Transverse colon (tissue), 4 donors: ENCODE measurements at regions of chr11 and their contacts with region 1.

Region 1: DNA sequence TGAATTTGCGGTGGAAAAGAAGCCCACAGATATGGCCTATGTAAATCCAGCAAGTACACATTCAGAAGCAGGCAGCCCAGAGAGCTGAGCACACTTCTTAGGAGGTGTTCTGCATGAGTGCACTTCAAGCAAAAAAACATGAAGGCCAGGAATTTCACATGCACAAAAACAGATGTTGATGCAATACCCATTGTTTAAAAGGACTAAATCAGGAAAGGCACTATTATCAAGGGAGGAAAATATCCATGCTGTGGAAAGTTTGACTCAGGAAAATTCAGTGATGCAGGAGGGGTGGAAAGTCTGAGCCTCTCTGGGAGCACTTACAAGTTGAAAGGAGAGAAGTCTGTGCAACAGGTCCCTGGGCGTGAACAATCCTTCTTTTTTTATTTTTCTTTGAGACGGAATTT is 15.8 kb upstream of the CARS1 start:
- DNase-seq: no peak
- H3K4me3 ChIP-seq: no peak overlapping the region
- H3K27ac ChIP-seq: no peak overlapping the region
- H3K4me1 ChIP-seq: no peaks in the 10 kb centered on the region
- H3K27me3 ChIP-seq: no peaks in the 10 kb centered on the region
- CTCF ChIP-seq: no peak
- EP300 ChIP-seq: no peak
- POLR2A ChIP-seq: no peak

Region 2: GRCh38 chr11:3021125-3021524 is 51.9 kb before region 1 on chr11:
- in situ Hi-C with region 1: no loop called
- intact Hi-C with region 1: no loop called
- DNase-seq: peak; percentile 61
- H3K4me3 ChIP-seq: no peak overlapping the region
- H3K27ac ChIP-seq: no peak overlapping the region
- H3K4me1 ChIP-seq: peaks cover 0 to 15% (median 5%) of the 10 kb centered on the region in 4 donors
- H3K27me3 ChIP-seq: no peaks in the 10 kb centered on the region
- CTCF ChIP-seq: peak; percentile 35 to 70 (median 61)
- EP300 ChIP-seq: no peak
- POLR2A ChIP-seq: no peak

Region 3: GRCh38 chr11:3043315-3043871 is 29.6 kb before region 1 on chr11:
- in situ Hi-C with region 1: no loop called
- intact Hi-C with region 1: loop called (anchors 1 kb)
- DNase-seq: peak; percentile 31
- H3K4me3 ChIP-seq: no peak overlapping the region
- H3K27ac ChIP-seq: peak overlapping the region; percentile 15 to 71 (median 43)
- H3K4me1 ChIP-seq: peaks cover 0 to 17% (median 12%) of the 10 kb centered on the region in 4 donors
- H3K27me3 ChIP-seq: no peaks in the 10 kb centered on the region
- CTCF ChIP-seq: no peak
- EP300 ChIP-seq: no peak
- POLR2A ChIP-seq: no peak